HEK293T (cell line): ENCODE measurements at regions of chr6 and their contacts with region 1.

Region 1: DNA sequence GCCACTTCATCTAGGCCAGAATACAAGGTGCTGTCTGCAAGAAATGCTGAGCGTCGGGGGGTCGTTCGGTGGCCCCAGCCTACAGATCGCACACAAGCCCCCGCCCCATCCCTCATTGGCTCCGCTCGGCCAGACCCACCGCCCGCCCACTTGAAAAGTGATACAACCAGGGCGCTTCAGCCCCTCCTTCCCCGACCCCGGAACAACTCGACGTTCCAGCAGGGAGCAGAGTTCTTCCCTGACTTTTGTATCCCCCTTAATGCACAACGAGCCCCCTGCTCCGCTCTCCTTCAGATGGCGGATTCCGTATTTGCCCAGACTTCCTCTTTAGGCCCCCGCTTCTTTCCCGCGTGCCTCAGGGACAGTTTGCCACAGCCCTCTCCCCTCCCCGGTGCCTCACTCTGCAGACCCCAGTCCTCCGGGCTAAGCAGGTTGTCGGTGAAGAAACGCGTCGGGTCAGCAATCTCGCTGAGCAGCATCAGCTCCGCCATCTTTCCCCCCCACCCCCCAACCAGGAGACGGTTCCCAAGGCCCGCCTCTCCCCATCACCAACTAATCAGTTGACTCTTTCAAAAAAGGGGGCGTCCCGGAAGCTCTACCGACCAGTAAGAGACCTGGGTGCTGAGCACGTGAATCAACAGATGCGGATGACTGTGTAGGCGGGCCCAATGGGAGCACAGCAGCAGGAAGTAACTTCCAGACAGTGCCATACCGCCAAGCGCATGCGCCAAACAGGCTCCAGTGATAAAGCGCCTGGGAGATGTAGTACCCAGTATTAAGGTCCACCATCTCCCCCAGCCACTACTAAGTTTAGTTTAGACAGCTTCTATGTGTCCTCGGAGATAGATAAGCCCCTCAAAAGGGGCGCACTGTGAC is at the start of gene ATF6B:
- DNase-seq: peak; percentile 97

Region 2: DNA sequence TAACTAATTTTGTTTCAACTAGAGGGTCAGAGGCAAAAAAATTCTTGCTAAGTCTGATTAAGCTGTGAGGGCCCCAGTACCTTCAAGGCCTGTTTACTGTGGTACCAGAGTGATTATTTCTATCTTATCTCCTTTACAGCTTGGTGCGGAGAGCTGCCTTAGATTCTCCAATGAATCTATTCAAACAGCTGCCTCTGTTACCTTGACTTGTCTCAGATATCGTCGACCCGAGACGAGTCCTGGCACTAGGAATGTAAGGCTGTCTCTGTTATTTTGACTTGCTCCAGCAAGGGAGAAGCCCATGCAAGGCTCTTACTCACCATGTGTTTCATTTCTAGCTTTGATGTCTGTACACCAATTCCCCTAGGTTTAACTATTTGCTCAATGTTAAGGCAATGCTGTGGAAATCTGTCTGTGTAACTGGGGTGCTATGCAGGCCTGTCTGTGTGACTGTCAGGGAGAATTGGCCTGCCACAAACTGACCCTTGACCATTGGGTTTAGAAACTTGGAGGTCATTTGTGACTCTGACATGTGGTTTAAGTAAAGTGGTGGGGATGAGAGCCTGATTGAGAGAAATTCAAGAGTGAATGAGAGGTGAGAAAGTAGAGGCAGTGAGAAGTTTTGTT is 12.6 kb after region 1 on chr6:
- CTCF ChIA-PET with region 1: no interaction called
- POLR2A ChIA-PET with region 1: interaction called, 15 read pairs
- DNase-seq: no peak

Region 3: DNA sequence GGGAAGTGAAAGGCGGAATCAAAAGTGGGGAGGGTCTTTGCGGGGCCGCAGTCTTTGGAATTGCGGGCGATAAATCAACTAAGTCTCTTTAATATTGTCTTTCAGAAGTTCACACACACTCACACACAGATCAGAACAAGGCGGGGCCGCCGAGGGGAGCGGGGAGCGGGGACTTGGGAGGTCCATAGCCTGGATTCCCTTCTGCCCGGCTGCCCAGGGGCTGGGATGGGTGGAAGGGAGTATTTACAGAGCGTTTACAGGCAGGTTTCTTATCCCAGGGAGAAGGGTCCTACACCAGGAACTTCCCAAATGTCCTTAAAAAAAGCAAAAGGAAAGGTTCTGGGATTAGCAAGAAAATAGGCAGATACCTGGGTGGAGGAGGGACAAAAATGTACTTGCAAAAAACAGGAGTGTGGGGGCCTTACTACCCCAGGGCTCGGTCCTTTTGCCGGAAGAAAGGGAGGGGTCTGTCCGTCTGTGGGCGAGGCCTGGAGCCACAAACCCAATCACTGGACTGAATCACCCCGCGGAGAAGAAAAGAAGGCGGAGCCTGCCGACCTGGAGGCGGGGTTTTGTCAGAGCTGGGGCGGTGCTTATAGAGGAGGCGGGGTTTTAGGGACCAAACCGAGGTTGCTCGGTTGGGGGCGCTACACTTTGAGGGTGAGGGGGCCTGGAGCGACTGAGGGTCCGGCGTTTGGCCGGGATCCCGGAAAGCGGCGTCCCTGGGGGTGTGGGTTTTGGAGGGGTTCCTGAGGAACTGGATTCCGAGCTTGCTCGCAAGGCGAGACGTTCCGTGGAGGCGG is 20.5 kb after region 1 on chr6:
- CTCF ChIA-PET with region 1: no interaction called
- POLR2A ChIA-PET with region 1: interaction called, 57 read pairs
- DNase-seq: peak; percentile 48

Region 4: DNA sequence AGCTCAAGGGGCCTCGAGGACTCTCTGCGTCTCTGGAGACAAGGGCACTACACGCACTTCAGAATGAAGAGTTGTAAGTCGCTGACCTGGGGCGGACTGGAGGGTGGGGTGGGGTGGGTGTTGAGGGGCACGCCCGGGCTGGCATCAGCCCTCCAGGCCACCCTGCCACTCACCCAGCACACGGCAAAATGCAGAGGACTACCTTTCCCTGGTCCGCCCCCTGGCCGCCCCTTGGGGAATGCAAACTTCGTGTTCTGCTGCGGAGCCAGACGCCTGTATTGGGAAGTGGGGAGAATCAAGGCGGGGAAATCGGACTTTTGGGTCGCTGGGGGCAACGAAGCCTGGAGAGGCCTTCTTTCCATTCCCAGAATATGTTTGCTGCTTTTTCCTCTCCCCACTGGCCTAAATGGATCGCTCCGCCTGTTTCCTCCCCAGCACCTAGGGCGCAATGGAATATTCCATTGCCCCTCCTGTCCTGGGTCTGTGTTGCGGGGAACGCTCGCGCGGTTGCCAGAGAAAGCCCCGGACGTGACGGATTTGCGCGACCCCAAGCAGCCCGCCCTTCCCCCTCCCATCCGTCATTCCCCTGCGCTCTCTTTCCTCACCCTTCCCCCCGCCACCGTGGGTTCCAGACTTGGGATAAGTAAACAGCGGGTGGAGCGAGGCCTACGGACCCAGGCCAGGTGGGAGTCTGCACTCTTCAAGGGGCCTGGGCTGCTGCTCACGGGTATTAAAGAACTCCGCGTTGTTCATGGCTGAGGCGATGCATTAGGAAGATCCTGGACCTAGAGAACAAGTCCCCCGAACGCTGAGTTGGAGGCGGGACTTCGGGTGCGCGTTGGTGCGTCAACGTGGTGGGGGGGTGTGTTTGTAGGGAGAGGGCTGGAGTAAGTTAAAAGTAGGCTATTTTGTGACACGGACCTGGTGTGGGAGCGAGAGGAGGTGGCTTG is 25.9 kb after region 1 on chr6 and contains the start of gene PPT2:
- CTCF ChIA-PET with region 1: no interaction called
- POLR2A ChIA-PET with region 1: interaction called, 57 read pairs
- DNase-seq: peak; percentile 90

Region 5: DNA sequence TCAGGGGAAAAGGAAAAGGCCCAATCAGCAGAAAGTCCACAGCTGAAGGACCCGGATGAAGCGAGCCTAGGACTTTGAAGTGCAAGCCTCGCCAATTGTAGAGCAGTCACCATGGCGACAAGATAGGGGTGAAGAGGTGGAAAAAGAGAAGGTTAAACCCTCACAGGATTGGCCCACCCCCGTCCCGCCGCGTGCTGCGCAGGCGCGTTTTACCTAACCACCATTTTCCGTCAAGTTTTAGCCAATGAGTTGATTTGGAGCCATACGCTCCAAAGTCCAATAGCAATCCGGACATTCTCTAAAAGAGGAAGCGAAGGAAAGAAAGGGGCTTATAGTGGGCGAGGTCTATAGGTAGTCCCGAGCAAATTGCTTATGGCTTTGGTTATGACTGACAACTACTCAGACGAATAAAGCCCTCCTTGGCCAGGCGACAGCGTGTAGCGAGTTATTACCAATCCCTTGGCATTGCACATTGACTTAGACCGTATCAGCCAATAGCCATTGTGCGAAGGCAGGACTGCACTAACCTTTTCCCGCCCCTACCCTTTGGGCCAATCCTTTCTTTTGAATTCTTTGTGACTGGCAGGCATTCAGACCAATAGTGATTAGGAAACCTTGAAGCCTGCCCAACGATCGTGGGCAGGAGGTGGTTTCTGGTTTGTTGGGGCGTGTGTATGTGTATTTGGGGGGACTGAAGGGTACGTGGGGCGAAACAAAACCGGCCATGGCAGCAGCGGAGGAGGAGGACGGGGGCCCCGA is 50.0 kb after region 1 on chr6 and contains the start of gene RNF5:
- CTCF ChIA-PET with region 1: no interaction called
- POLR2A ChIA-PET with region 1: interaction called, 41 read pairs
- DNase-seq: peak; percentile 89

Region 6: DNA sequence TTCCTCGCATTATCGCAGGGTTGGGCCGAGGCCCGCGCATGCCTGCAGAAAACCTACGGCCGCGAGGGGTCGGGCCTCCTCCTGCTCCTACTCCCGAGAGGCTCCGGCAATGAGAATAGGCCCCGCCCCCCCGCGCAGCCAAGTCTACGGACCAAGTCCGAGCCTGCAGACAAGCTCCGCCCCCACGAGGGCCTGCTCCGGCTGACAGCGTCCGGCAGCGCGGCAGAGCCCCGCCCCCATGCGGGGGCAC is 67.6 kb after region 1 on chr6:
- CTCF ChIA-PET with region 1: interaction called, 3 read pairs
- POLR2A ChIA-PET with region 1: interaction called, 22 read pairs
- DNase-seq: peak; percentile 98

Region 7: DNA sequence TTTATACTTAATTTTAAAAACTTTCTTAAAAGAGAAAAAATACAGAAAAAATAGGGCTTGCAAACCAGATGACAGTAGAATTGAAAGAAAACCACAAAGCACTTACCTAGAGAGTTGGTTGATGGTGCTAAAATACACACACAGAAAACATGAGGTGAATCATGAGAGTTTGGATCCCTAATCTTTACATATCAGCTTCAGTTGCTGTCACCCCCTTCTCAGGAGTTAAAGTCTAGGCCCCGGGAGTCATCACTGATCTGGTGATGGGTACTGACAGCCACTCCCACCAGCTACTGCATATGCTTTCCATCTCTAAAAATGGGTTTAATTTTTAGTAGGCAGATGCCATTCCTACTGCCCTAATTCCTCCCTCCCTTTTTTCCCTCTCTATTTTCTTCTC is 227.1 kb after region 1 on chr6:
- CTCF ChIA-PET with region 1: no interaction called
- POLR2A ChIA-PET with region 1: no interaction called
- DNase-seq: no peak

Region 8: DNA sequence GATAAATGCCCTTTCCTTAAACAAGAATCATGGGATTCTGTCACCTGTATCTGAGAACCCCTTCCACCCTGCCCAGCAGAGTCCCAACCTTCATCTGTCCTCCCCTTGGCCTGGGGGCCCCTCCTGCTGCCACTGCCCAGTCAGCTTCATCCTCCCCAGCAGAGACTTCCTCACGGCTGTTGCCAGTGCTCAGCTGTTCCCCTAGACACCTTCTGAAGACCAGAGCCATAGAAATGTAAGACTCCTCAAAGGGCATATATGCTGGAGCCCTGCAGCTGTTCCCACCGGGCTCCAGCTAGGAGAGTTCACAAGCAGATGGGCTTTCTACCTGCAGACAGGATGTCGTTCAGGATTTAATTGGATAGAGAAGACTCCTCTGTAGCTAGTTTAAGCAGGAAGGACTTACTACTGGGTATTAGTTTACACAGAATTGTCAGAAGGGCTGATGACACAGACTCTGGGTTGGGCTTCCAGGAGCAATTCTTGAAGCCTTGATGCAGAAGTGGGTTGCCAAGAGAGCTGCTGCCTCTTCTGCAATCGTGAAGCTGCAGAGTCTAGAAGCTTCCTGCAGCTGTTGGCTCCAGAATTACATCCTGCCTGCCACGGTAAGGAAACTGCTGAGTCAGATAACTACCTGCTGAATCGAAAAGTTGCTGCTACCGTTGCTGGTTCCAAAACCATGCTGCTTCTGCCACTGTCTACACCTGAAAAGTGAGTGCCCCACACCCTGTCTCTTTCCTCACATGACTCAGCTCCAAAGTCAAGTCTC is 1732.9 kb after region 1 on chr6:
- CTCF ChIA-PET with region 1: no interaction called
- POLR2A ChIA-PET with region 1: no interaction called
- DNase-seq: no peak